HEK293 (cell line): ENCODE measurements at regions of chr11 and their contacts with region 1.

Region 1: DNA sequence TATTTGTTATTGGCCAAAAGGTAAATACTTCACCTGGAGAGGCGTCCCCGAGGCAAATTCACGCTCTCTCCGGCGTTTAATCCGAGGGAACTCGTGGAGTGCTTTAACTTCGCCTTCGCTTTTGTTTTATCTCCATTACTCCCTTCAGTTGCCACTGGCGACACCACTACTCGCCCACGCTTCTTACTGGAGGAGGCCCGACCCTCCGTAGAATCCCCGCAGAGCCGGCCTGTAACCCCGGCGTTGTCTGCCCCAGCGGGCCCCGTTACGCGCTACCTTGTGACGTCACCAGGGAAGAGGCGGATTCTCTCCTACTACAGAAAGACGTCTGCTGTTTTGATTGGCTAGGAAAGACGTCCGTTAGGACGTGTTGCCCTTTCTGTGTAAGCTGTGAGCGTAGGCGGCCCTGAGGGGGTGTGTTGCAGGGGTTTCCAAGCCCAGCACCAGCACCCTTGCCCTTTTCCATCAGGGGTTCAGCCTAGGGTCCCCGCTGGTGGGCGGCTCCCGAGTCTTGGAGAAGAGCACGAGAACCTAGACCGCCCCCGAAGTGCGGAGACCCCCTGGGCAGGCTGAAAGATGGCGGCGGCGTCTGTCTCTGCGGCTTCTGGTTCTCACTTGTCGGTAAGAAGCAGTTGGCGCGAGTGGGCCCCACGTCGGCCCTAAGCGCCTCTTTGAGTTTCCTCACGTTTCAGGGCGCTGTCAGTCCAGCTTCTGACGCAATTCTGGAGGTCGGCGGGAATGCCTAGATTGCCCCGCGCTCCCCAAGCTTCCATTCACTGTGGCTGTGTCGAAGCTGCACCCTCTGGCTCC is at the start of gene CEP57:
- H3K4me3 ChIP-seq: peak within 1 kb of the TSS; percentile 99
- H3K27ac ChIP-seq: peak within 1 kb of the TSS; percentile 80
- H3K4me1 ChIP-seq: no peaks in the 10 kb centered on the region
- CTCF ChIP-seq: no peak

Region 2: GRCh38 chr11:95461858-95462257 is 328.5 kb before region 1 on chr11:
- CTCF ChIA-PET with region 1: no interaction called
- POLR2A ChIA-PET with region 1: no interaction called
- H3K4me3 ChIP-seq: no peak overlapping the region
- H3K27ac ChIP-seq: no peak overlapping the region
- H3K4me1 ChIP-seq: no peaks in the 10 kb centered on the region
- CTCF ChIP-seq: no peak

Region 3: DNA sequence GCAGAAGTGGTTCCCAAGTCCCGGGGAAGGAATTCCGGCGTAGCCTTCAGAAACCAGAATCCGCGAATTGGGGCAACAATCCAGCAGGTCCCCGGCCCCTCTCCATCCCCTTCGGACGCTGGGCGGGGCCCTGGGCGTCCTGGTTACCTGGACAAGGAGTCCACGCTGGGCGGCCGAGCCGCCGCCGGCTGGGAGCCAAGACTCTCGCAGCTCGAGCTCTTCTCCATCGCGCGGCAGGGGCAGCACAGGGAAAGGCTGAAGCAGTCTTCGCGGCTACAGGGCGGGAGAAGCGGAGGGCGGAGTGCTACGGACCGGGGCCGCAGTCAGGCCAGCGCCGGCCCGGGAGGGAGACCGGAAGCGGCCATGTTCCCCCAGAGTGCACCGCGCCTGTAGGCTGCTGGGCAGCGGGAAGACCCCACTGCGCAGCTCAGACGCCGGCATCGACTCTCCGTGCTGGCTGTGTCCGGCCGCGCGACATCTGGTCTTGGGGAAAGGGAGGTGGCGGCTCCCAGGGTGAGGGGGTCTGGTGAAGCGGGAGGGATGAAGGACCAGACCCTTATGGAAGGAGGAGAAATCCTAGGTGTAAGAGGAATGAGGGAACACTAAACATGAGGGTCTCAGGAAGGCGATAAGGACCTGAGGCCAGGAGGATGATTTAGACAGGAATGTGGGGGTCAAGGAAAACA is 133.5 kb after region 1 on chr11 and contains the start of gene MTMR2:
- CTCF ChIA-PET with region 1: no interaction called
- POLR2A ChIA-PET with region 1: interaction called, 11 read pairs
- H3K4me3 ChIP-seq: peak within 1 kb of the TSS; percentile 94
- H3K27ac ChIP-seq: peak within 1 kb of the TSS; percentile 74
- H3K4me1 ChIP-seq: no peaks in the 10 kb centered on the region
- CTCF ChIP-seq: no peak